ENCODE measurements at regions of chr9 and their contacts with region 1.

Region 1: GRCh38 chr9:83070261-83070660 is 7.3 kb upstream of the RASEF start:
- DNase-seq: no peak
- H3K4me3 Mint-ChIP-seq: no peak overlapping the region
- H3K27ac Mint-ChIP-seq: no peak overlapping the region
- H3K4me1 Mint-ChIP-seq: peaks cover 31% of the 10 kb centered on the region
- H3K27me3 Mint-ChIP-seq: no peaks in the 10 kb centered on the region
- CTCF ChIP-seq: no peak

Region 2: DNA sequence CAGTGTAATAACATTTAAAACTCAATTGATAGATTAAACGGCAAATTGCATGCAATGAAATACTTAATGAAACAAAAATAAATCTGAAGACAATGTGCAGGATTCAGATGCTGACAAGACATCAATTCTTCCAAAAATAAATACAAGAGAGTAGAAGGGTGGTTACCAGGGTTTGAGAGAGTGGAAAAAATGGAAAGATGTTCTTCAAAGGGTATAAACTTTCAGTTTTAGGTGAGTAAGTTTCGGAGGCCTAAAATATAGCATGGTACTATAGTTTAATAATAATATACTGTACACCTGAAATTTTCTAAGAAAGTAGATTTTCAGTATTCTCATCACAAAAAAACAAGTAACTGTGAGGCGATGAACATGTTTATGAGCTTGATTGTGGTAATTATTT is 40.9 kb after region 1 on chr9:
- CTCF ChIA-PET with region 1: no interaction called
- intact Hi-C with region 1: loop called (anchors 5 kb)
- DNase-seq: no peak
- H3K4me3 Mint-ChIP-seq: no peak overlapping the region
- H3K27ac Mint-ChIP-seq: no peak overlapping the region
- H3K4me1 Mint-ChIP-seq: no peaks in the 10 kb centered on the region
- H3K27me3 Mint-ChIP-seq: no peaks in the 10 kb centered on the region
- CTCF ChIP-seq: no peak

Region 3: GRCh38 chr9:83257937-83258891 is 188.0 kb after region 1 on chr9:
- CTCF ChIA-PET with region 1: no interaction called
- intact Hi-C with region 1: no loop called
- DNase-seq: no peak
- H3K4me3 Mint-ChIP-seq: no peak overlapping the region
- H3K27ac Mint-ChIP-seq: no peak overlapping the region
- H3K4me1 Mint-ChIP-seq: no peaks in the 10 kb centered on the region
- H3K27me3 Mint-ChIP-seq: no peaks in the 10 kb centered on the region
- CTCF ChIP-seq: no peak